Ovary (tissue), 10 donors: ENCODE measurements at regions of chr9 and their contacts with region 1.

Region 1: DNA sequence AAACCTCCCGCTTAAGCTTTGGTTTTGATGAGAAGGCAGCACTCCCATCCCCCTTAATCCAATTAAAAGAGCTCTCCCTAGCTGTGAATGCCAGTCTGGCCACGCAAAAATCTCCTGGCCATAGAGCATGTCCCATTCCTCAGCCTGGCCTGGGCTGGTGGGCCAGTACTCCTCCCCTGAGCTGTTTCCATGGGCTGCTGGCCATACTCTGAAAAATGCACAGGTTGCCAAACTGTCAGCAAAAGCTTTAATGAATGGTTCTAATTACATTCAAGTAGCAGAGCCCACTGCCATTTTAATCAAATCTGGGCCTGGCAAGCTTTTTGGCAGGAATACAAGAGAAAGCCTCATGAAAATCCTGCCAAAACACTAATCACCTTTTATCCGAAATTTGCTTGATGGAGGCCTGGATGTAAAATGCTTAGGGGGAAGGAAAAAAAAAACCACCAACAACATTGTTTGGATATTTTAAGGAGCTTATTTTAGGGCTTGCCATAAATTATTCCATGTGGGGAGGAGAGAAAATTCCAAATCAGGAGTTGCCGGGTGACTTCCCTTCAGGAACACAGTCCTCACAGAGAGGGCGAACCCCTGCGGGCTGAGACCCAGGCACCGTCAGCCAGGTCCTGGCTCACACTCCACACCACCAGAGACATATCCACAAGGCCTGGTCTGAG is 243.3 kb downstream of the SEC61B start:
- DNase-seq: no peak
- H3K4me3 ChIP-seq: no peak overlapping the region
- H3K27ac ChIP-seq: no peak overlapping the region
- H3K4me1 ChIP-seq: no peaks in the 10 kb centered on the region
- H3K27me3 ChIP-seq: no peaks in the 10 kb centered on the region
- CTCF ChIP-seq: no peak
- EP300 ChIP-seq: no peak
- POLR2A ChIP-seq: no peak

Region 2: DNA sequence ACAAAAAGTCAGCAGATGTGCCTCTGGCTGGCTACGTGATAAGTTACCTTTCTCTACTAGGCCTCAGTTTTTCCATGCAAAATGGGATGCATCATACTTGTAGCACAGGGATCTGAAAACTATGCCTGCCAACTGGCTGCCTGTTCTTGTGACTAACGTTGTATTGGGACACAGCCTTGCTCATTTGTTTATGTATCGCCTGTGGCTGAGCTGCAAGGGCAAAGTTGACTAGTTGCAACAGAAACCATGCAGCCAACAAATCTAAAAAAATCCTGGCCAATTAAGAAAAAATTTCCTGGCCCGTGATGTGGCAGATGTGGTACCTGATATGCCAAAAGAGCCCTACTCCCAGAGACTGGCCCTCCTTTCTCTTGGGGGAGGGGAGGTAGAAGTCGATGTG is 112.0 kb before region 1 on chr9:
- intact Hi-C with region 1: no loop called
- DNase-seq: no peak
- H3K4me3 ChIP-seq: no peak overlapping the region
- H3K27ac ChIP-seq: no peak overlapping the region
- H3K4me1 ChIP-seq: no peaks in the 10 kb centered on the region
- H3K27me3 ChIP-seq: no peaks in the 10 kb centered on the region
- CTCF ChIP-seq: no peak
- EP300 ChIP-seq: no peak
- POLR2A ChIP-seq: no peak

Region 3: DNA sequence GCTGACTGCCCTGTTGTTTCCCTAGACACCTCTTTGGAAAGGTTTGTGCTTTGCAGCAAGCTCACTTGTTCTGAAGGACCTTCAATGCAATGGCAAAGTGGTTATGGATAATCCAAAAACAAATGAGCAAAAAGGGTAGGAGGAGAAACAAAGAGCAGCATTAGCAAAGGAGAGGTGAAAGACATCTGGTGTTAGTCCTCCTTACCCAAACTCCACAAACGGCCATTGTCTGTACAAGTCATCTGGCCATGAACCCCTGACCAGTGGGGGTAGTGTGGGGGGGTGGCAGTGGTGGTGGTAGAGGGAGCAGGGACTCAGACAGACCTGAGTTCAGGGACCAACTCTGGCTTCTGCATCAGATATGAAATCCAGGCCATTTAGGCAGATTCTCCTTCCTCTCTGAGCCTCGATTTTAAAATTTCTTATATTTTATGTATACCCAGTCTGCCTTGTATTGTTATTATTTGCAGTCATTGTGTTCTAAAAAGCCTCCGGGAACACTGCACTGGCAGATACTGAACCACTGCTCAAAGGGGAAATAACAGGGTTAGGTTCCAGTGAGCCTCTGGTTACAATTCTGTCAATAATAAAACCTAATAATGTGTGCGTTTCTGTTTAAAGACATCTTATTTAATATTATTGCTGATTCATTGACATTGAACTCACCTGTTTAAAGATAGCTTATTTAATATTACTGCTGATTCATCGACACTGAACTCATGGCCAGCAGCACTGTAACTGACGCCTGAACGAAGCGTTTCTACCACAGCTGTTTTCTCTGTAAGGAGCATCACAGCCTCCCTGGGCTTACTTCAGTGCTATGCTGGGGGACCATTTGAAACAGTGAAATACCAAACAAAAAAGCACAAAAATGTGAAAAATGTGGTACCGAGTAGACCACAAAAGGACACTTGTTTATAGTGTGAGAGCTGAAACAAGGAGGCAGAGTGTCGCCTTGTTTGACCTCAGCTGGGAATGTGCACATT is 87.3 kb before region 1 on chr9:
- intact Hi-C with region 1: loop called in 1 of 4 experiments (anchors 5 kb)
- DNase-seq: no peak
- H3K4me3 ChIP-seq: no peak overlapping the region
- H3K27ac ChIP-seq: no peak overlapping the region
- H3K4me1 ChIP-seq: no peaks in the 10 kb centered on the region
- H3K27me3 ChIP-seq: no peaks in the 10 kb centered on the region
- CTCF ChIP-seq: no peak
- EP300 ChIP-seq: no peak
- POLR2A ChIP-seq: no peak

Region 4: GRCh38 chr9:99513441-99514112 is 48.2 kb after region 1 on chr9:
- intact Hi-C with region 1: no loop called
- DNase-seq: no peak
- H3K4me3 ChIP-seq: no peak overlapping the region
- H3K27ac ChIP-seq: no peak overlapping the region
- H3K4me1 ChIP-seq: no peaks in the 10 kb centered on the region
- H3K27me3 ChIP-seq: no peaks in the 10 kb centered on the region
- CTCF ChIP-seq: no peak
- EP300 ChIP-seq: no peak
- POLR2A ChIP-seq: no peak

Region 5: DNA sequence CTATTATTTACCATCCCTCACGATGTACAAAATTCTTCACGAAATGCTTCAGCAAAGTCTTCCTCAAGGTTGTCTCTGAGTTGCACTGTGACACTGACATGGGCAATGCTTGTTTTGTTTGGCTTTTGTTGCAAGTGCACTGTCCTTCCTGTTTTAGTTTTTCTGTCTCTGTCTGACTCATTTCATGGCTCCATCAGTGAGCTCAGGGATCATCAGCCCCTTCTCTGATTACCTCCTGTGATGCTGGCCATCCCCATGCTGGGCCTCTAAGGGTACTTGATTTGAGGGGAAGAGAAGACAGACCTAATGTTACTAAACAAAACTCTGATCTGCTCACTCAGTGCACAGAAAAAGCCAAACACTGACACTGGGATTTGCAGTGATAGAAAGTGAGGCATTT is 403.5 kb after region 1 on chr9:
- intact Hi-C with region 1: no loop called
- DNase-seq: no peak
- H3K4me3 ChIP-seq: no peak overlapping the region
- H3K27ac ChIP-seq: no peak overlapping the region
- H3K4me1 ChIP-seq: no peaks in the 10 kb centered on the region
- H3K27me3 ChIP-seq: no peaks in the 10 kb centered on the region
- CTCF ChIP-seq: no peak
- EP300 ChIP-seq: no peak
- POLR2A ChIP-seq: no peak